GM12878 (cell line): ENCODE measurements at regions of chr4 and their contacts with region 1.

Region 1: GRCh38 chr4:74370912-74371311 is 6.0 kb downstream of the EREG start:
- DNase-seq: no peak
- ATAC-seq: peak; percentile 98
- H3K4me3 ChIP-seq: no peak overlapping the region
- H3K27ac ChIP-seq: no peak overlapping the region
- H3K4me1 ChIP-seq: no peaks in the 10 kb centered on the region
- H3K27me3 ChIP-seq: peaks cover 0 to 3% of the 10 kb centered on the region in 2 experiments; a peak in 1 of 4 replicates
- CTCF ChIP-seq: peak; percentile 66 to 77 (median 71)
- EP300 ChIP-seq: no peak
- POLR2A ChIP-seq: no peak
- RAD21 ChIP-seq: peak; percentile 61

Region 2: DNA sequence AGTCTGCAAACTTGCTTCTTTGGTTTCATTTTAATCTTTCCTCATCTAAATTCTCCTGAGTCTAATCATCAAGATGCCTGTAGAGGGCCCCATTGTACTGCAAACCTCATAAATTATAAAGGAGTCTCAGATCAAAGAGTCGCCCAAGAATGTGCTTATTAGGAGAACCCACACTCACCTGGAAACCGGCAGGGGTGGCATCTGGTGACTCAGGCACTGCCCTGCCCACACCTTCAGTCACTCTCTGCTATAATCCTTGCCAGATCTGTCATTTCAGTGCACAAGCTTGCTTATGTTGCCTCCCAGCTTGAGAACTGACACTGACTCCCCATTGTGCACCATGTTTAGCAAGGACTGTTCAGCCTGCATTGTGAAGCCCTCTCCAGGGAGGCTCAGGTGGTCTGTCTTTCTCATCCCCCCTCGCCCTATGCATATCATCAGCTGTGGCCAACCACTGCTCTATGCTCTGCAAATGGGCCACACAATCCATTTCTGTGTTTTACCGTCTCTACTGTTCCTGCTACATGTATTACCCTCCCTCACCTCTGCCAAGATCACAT is 50.3 kb before region 1 on chr4:
- CTCF ChIA-PET with region 1: interaction called, 11 read pairs
- POLR2A ChIA-PET with region 1: no interaction called
- RAD21 ChIA-PET with region 1: interaction called, 3 read pairs
- SMC1A ChIA-PET with region 1: interaction called, 8 read pairs
- in situ Hi-C with region 1: no loop called
- intact Hi-C with region 1: loop called (anchors 2 kb)
- DNase-seq: peak; percentile 9
- ATAC-seq: peak; percentile 90
- H3K4me3 ChIP-seq: no peak overlapping the region
- H3K27ac ChIP-seq: no peak overlapping the region
- H3K4me1 ChIP-seq: no peaks in the 10 kb centered on the region
- H3K27me3 ChIP-seq: 0 out of 4 replicates have a peak, but pooled peaks cover 0 to 3% of the 10 kb centered on the region in 2 experiments
- CTCF ChIP-seq: peak; percentile 39 to 58 (median 50); a peak in 5 of 6 replicates
- EP300 ChIP-seq: no peak
- POLR2A ChIP-seq: no peak
- RAD21 ChIP-seq: peak; percentile 89

Region 3: DNA sequence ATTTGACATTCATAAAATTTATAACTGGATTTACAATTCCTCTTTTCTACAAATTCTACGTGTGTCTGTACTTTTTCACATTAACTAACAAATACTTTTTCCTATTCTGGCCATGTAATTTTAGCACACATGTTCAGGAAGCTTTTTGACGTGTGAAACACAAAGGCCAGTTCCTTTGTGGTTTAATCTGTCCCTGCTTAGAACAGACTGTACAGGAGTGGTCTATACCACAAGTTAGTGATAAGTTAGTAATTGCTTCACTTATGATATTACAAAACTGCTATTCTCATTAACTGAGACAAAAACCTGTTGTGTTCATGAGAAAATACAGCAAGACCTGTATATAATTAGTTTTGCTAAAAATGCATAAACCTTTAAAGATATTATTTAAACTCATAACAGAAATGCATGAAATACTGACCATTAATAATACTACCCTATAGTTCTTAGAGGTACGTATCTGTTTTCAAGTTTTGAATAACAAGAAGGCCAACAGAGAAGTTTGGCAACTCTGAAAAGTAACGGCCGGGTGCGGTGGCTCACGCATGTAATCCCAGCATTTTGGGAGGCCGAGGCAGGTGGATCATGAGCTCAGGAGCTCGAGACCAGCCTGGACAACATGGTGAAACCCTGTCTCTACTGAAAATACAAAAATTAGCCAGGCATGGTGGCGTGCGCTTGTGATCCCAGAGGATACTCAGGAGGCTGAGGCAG is 60.4 kb after region 1 on chr4:
- CTCF ChIA-PET with region 1: no interaction called
- POLR2A ChIA-PET with region 1: no interaction called
- RAD21 ChIA-PET with region 1: no interaction called
- SMC1A ChIA-PET with region 1: no interaction called
- in situ Hi-C with region 1: no loop called
- intact Hi-C with region 1: no loop called
- DNase-seq: peak; percentile 23
- ATAC-seq: peak; percentile 92
- H3K4me3 ChIP-seq: no peak overlapping the region
- H3K27ac ChIP-seq: no peak overlapping the region
- H3K4me1 ChIP-seq: no peaks in the 10 kb centered on the region
- H3K27me3 ChIP-seq: no peaks in the 10 kb centered on the region
- CTCF ChIP-seq: no peak
- EP300 ChIP-seq: peak; percentile 75 to 80; a peak in 2 of 4 replicates
- POLR2A ChIP-seq: no peak
- RAD21 ChIP-seq: no peak

Region 4: GRCh38 chr4:74531963-74532794 is 161.3 kb after region 1 on chr4:
- CTCF ChIA-PET with region 1: interaction called, 76 read pairs
- POLR2A ChIA-PET with region 1: no interaction called
- RAD21 ChIA-PET with region 1: no interaction called
- SMC1A ChIA-PET with region 1: interaction called, 5 read pairs
- in situ Hi-C with region 1: loop called (anchors 10 kb)
- intact Hi-C with region 1: no loop called
- DNase-seq: peak; percentile 8
- ATAC-seq: peak; percentile 86
- H3K4me3 ChIP-seq: no peak overlapping the region
- H3K27ac ChIP-seq: no peak overlapping the region
- H3K4me1 ChIP-seq: no peaks in the 10 kb centered on the region
- H3K27me3 ChIP-seq: no peaks in the 10 kb centered on the region
- CTCF ChIP-seq: peak; percentile 44 to 59 (median 45)
- EP300 ChIP-seq: no peak
- POLR2A ChIP-seq: no peak
- RAD21 ChIP-seq: peak; percentile 58

Region 5: GRCh38 chr4:74623041-74623440 is 252.1 kb after region 1 on chr4:
- CTCF ChIA-PET with region 1: interaction called, 63 read pairs
- POLR2A ChIA-PET with region 1: no interaction called
- RAD21 ChIA-PET with region 1: interaction called, 25 read pairs
- SMC1A ChIA-PET with region 1: interaction called, 26 read pairs
- in situ Hi-C with region 1: no loop called
- intact Hi-C with region 1: no loop called
- DNase-seq: no peak
- ATAC-seq: peak; percentile 77
- H3K4me3 ChIP-seq: no peak overlapping the region
- H3K27ac ChIP-seq: no peak overlapping the region
- H3K4me1 ChIP-seq: no peaks in the 10 kb centered on the region
- H3K27me3 ChIP-seq: no peaks in the 10 kb centered on the region
- CTCF ChIP-seq: peak; percentile 45 to 71 (median 56); a peak in 5 of 6 replicates
- EP300 ChIP-seq: no peak
- POLR2A ChIP-seq: no peak
- RAD21 ChIP-seq: peak; percentile 63